Ascending aorta (tissue), 2 donors: ENCODE measurements at regions of chr10 and their contacts with region 1.

Region 1: GRCh38 chr10:119826771-119827170 is 45.9 kb downstream of the MCMBP start:
- DNase-seq: no peak
- H3K4me3 ChIP-seq: no peak overlapping the region
- H3K27ac ChIP-seq: no peak overlapping the region
- H3K4me1 ChIP-seq: no peaks in the 10 kb centered on the region
- H3K27me3 ChIP-seq: no peaks in the 10 kb centered on the region
- CTCF ChIP-seq: no peak

Region 2: GRCh38 chr10:119750391-119751230 is 76.2 kb before region 1 on chr10:
- intact Hi-C with region 1: loop called (anchors 5 kb)
- DNase-seq: peak in 1 of 2 donors; percentile 87
- H3K4me3 ChIP-seq: no peak overlapping the region
- H3K27ac ChIP-seq: no peak overlapping the region
- H3K4me1 ChIP-seq: peaks cover 0 to under 1% of the 10 kb centered on the region in 2 donors
- H3K27me3 ChIP-seq: no peaks in the 10 kb centered on the region
- CTCF ChIP-seq: peak; percentile 87 to 93 (median 92)

Region 3: DNA sequence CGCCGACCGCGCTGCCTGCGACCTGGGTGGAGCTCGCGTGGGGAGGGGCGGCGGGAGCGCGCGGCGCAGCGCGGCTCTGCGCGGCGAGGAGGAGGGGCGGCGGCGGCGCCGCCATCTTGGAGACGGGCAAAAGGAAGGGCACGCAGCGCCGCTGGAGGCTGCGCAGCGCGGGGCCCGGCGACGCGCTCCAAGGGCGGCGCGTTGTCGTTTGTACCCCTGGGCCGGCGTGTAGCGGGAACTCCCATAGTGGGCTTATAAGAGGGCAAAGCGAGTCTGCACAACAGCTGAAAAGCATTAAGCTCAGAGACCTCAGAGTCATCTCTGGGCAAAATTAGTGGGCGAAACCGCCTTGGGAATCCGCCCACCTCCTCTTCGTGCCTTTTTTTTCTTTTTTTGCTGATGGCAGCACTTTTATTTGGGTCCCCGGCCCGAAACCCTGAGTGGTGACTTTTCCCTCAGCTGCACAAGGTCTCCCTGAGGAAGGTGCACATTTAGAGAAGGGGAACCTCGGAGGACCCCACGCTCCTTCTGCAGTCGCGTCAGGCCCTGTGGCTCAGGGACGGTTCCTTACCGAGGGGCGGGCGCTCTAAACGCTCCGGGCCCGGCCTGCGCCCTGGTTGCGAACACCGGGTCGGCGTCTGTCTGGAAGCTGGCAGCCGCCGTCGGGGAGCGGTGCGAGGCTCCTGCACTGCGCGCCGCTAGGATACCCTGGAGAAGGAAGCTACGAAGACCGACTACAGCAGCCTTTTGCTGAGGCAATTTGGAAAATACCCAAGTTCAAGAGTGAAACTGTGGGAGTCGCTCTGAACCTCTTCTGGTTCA is 46.3 kb after region 1 on chr10:
- intact Hi-C with region 1: no loop called
- DNase-seq: peak; percentile 30 to 91
- H3K4me3 ChIP-seq: peak overlapping the region; percentile 72 to 91
- H3K27ac ChIP-seq: peak overlapping the region; percentile 85 to 90
- H3K4me1 ChIP-seq: peaks cover 0 to 18% of the 10 kb centered on the region in 2 donors
- H3K27me3 ChIP-seq: no peaks in the 10 kb centered on the region
- CTCF ChIP-seq: no peak